A673 (cell line): ENCODE measurements at regions of chr3 and their contacts with region 1.

Region 1: DNA sequence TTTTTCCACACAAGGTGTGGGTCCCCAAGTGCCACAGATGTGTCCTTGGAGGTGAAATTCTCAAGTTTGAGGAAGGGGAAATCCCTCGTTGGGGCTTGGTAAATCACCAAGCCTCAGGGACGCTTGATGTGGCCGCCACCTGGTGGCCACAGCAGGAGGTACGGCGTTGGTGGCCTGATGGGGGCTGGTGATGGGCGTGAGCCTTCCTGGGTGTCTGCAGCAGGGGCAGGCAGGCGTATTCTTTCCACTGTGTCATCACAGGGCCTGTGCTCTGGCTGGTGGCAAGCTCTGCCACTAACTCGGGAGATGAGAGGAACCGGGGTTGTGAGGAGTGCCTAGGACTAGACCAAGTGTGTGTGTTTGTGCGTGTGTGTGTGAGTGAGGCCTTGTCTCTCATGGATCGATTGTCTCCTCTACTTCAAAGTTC is 4.2 kb downstream of the ACOX2 start:
- DNase-seq: peak; percentile 65
- H3K4me3 ChIP-seq: no peak overlapping the region
- H3K27ac ChIP-seq: no peak overlapping the region
- H3K4me1 ChIP-seq: peaks cover 17% of the 10 kb centered on the region
- H3K27me3 ChIP-seq: no peaks in the 10 kb centered on the region
- CTCF ChIP-seq: peak; percentile 72

Region 2: DNA sequence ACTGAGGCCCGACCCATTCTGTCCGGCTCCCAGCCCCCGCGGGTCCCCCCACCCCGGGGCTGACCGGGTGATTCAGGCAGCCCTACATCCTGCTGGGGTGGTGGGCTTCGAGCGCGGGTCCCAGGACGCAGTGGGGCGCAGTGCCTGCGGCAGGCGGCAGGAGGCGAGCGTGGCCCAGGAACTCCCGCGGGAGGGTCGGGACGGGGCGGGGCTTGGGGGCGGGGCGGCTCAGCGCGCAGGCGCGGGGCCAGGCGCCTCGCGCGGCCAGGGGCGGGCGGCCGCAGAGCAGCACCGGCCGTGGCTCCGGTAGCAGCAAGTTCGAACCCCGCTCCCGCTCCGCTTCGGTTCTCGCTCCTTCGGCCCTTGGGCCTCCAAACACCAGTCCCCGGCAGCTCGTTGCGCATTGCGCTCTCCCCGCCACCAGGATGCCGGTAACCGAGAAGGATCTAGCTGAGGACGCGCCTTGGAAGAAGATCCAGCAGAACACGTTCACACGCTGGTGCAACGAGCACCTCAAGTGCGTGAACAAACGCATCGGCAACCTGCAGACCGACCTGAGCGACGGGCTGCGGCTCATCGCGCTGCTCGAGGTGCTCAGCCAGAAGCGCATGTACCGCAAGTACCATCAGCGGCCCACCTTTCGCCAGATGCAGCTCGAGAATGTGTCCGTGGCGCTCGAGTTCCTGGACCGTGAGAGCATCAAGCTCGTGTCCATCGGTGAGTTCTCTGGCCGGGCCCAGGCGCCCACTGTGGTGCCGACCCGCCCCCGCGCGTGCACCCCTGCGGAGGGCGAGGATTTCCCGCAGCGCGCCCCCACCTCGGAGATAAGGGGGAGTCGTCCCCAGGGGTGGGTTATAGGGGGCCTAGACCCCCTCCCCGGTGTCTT is 524.4 kb before region 1 on chr3 and contains the start of gene FLNB:
- CTCF ChIA-PET with region 1: no interaction called
- POLR2A ChIA-PET with region 1: no interaction called
- intact Hi-C with region 1: no loop called
- DNase-seq: peak; percentile 68
- H3K4me3 ChIP-seq: peak within 1 kb of the TSS; percentile 77
- H3K27ac ChIP-seq: peak within 1 kb of the TSS; percentile 63
- H3K4me1 ChIP-seq: no peaks in the 10 kb centered on the region
- H3K27me3 ChIP-seq: no peaks in the 10 kb centered on the region
- CTCF ChIP-seq: peak; percentile 61
- total RNA-seq, gene FLNB: 41.2 and 43.7 TPM in 2 replicates

Region 3: DNA sequence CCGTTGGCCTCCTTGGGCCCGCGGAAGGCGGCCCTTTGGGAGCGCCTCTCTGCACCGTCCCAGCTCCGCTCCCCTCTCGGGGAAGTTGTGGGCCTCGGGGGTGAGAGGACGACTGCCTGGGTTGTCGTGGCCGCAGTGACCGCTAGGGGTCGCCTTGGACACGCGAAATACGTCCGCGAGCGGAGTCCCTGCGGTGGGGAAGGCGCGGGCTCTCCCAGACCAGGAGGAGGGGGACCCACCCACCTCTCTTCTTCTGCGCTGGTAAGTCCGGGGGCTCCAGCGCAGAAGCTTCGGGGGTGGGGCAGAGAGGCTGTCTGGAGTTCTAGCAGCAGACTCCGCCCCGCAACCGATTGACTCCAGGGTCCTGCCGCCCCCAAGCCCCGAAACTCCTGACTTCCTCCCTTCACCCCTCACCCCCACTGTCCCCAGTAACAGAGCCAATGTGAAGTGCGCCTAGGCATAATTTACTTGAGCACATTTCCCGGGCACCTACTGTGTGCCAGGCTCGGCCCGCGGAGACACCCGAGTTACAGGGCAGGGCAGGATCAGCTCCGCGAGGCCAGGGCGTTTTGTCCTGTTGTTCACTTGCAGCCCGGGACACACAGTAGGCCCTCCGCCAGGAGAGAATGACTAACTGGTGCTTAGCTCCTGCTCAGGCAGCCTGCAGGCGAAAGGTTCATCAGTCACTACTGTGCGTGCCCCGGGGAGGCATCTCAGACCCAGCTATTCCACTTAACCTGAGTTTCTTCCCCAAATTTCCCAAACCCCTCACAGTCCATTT is 354.9 kb before region 1 on chr3:
- CTCF ChIA-PET with region 1: no interaction called
- POLR2A ChIA-PET with region 1: no interaction called
- intact Hi-C with region 1: loop called (anchors 5 kb)
- DNase-seq: peak; percentile 87
- H3K4me3 ChIP-seq: peak overlapping the region; percentile 29
- H3K27ac ChIP-seq: no peak overlapping the region
- H3K4me1 ChIP-seq: no peaks in the 10 kb centered on the region
- H3K27me3 ChIP-seq: no peaks in the 10 kb centered on the region
- CTCF ChIP-seq: peak; percentile 80

Region 4: DNA sequence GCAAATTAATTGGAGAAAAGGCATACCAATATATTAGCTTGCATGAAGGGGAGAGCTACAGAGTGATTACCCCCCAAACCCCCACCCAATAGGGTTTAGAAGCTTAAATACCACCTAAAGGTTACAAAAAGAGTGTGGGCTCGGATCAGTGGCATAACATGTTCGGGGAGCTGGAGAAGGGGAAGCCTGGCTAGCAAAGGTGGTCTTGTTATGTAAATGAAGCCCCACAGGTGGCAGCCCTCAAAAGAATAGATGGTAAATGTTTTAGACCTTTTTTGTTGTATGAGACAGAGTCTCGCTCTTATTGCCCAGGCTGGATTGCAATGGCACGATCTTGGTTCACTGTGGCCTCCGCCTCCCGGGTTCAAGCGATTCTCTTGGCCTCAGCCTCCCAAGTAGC is 211.0 kb before region 1 on chr3:
- CTCF ChIA-PET with region 1: no interaction called
- POLR2A ChIA-PET with region 1: interaction called, 4 read pairs
- intact Hi-C with region 1: loop called (anchors 2 kb)
- DNase-seq: no peak
- H3K4me3 ChIP-seq: no peak overlapping the region
- H3K27ac ChIP-seq: no peak overlapping the region
- H3K4me1 ChIP-seq: no peaks in the 10 kb centered on the region
- H3K27me3 ChIP-seq: no peaks in the 10 kb centered on the region
- CTCF ChIP-seq: no peak

Region 5: GRCh38 chr3:58433400-58434169 is 99.2 kb before region 1 on chr3 and contains the start of gene PDHB:
- CTCF ChIA-PET with region 1: no interaction called
- POLR2A ChIA-PET with region 1: no interaction called
- intact Hi-C with region 1: loop called (anchors 5 kb)
- DNase-seq: peak; percentile 88
- H3K4me3 ChIP-seq: peak within 1 kb of the TSS; percentile 71
- H3K27ac ChIP-seq: peak within 1 kb of the TSS; percentile 84
- H3K4me1 ChIP-seq: no peaks in the 10 kb centered on the region
- H3K27me3 ChIP-seq: no peaks in the 10 kb centered on the region
- CTCF ChIP-seq: no peak
- total RNA-seq, gene PDHB: 56.0 and 58.8 TPM in 2 replicates

Region 6: GRCh38 chr3:58464866-58465265 is 67.9 kb before region 1 on chr3:
- CTCF ChIA-PET with region 1: no interaction called
- POLR2A ChIA-PET with region 1: no interaction called
- intact Hi-C with region 1: loop called (anchors 2 kb)
- DNase-seq: no peak
- H3K4me3 ChIP-seq: no peak overlapping the region
- H3K27ac ChIP-seq: no peak overlapping the region
- H3K4me1 ChIP-seq: peaks cover 15% of the 10 kb centered on the region
- H3K27me3 ChIP-seq: no peaks in the 10 kb centered on the region
- CTCF ChIP-seq: no peak